PC-9 (cell line): ENCODE measurements at regions of chr4 and their contacts with region 1.

Region 1: GRCh38 chr4:40736910-40737309 is 12.8 kb upstream of the NSUN7 start:
- DNase-seq: peak in 1 of 2 experiments; percentile 39
- H3K4me3 ChIP-seq: no peak overlapping the region
- H3K27ac ChIP-seq: no peak overlapping the region
- H3K4me1 ChIP-seq: no peaks in the 10 kb centered on the region; the same call in 1 of the 2 replicates
- H3K27me3 ChIP-seq: no peaks in the 10 kb centered on the region
- CTCF ChIP-seq: peak; percentile 66

Region 2: GRCh38 chr4:40897557-40898203 is 160.8 kb after region 1 on chr4:
- CTCF ChIA-PET with region 1: interaction called, 9 read pairs
- POLR2A ChIA-PET with region 1: no interaction called
- intact Hi-C with region 1: loop called (anchors 1 kb)
- DNase-seq: peak; percentile 66 to 69
- H3K4me3 ChIP-seq: peak overlapping the region; percentile 64
- H3K27ac ChIP-seq: no peak overlapping the region
- H3K4me1 ChIP-seq: no peaks in the 10 kb centered on the region
- H3K27me3 ChIP-seq: no peaks in the 10 kb centered on the region
- CTCF ChIP-seq: peak; percentile 90

Region 3: GRCh38 chr4:40924096-40924792 is 187.3 kb after region 1 on chr4:
- CTCF ChIA-PET with region 1: interaction called, 12 read pairs
- POLR2A ChIA-PET with region 1: no interaction called
- intact Hi-C with region 1: loop called (anchors 2 kb)
- DNase-seq: peak in 1 of 2 experiments; percentile 68
- H3K4me3 ChIP-seq: no peak overlapping the region
- H3K27ac ChIP-seq: no peak overlapping the region
- H3K4me1 ChIP-seq: no peaks in the 10 kb centered on the region
- H3K27me3 ChIP-seq: no peaks in the 10 kb centered on the region
- CTCF ChIP-seq: peak; percentile 94